ENCODE measurements at regions of chr20 and their contacts with region 1.

Region 1: DNA sequence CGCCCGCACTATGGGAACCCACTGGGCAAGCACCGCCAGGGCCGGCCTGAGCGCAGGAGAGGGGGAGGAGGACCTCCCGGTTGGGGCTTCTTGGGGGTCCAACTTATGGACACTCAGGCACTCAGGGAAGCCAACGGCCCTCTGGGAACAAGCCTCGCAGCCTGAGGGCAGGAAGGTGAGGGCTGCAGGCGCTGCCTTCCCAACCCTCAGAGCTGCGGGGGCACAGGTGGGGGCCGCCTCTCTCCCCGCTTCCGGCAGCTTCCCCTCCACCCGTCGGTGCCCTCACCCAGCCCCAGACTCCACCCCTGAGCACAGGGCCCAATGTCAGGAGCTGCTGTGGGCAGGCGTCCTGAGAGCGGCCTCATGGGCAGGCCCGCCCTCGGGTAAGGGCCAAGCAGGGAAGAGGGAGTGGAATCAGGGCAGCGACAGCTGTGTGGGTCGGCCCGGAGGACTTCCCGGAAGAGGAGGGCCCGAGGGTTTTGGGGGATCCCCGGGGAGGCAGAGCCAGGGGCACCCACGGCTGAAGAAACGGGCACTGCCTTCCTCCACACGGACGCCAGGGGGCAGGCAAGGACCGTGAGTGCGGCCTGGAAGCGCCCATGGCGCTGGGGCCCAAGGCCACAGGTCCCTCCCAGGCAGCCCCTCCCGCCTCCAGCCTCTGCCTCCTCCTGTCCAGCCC is 488 bp upstream of the PTK6 start:
- DNase-seq: peak; percentile 98
- ATAC-seq: peak; percentile 85
- H3K4me3 ChIP-seq: peak overlapping the region; percentile 84
- H3K27ac ChIP-seq: peak overlapping the region; percentile 85
- H3K4me1 ChIP-seq: peaks cover 33% of the 10 kb centered on the region
- H3K27me3 ChIP-seq: no peaks in the 10 kb centered on the region
- CTCF ChIP-seq: peak; percentile 84

Region 2: DNA sequence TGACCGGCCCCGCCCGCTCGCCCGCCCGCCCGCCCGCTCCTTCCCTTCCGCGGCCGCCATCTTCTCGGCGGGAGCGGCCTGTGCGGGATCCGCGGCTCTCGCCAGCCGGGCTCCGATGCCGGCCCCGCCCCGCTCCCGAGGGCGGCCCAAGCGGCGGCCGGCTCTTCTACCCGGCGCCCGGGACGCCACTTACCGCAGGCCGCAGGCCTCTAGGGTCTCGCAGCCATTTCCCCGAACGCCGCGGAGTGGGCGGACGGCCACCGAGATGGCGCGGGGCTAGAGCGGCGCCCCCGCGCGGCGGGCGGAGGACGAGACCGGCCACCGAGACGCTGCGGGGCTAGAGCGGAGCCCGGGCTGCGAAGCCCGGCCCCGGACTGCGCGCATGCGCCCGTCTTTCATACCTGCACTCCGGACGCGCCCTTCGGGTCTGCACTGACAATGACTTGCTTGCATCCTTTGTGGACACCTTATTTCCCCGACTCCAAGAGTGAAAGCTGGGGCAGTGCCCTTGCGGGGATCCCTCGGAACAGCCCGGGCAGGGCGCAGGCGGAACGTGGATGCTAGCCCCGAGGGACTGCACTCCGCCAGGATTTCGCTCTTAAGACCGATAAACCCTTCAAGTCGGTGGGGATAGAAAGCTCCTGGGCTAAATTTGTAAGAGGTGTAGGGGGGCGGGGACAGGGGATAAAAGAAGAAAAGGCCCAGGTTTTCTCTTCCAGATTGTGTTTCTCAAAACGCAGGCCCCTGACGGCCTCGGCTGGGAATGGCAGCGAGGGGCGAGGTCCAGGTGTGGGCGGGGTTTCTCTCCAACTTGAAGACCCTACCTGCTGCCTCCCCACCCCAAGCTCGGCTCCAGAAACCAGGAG is 611.2 kb before region 1 on chr20 and contains the start of gene DIDO1:
- CTCF ChIA-PET with region 1: no interaction called
- POLR2A ChIA-PET with region 1: no interaction called
- intact Hi-C with region 1: loop called (anchors 5 kb)
- DNase-seq: peak; percentile 91
- ATAC-seq: peak; percentile 75
- H3K4me3 ChIP-seq: peak within 1 kb of the TSS; percentile 80
- H3K27ac ChIP-seq: peak within 1 kb of the TSS; percentile 78
- H3K4me1 ChIP-seq: peaks cover 27% of the 10 kb centered on the region
- H3K27me3 ChIP-seq: no peaks in the 10 kb centered on the region
- CTCF ChIP-seq: peak; percentile 57
- total RNA-seq, gene DIDO1: 33.2 and 40.4 TPM in 2 replicates

Region 3: GRCh38 chr20:63580796-63581461 is 43.3 kb after region 1 on chr20:
- CTCF ChIA-PET with region 1: interaction called, 3 read pairs
- POLR2A ChIA-PET with region 1: interaction called, 3 read pairs
- intact Hi-C with region 1: loop called (anchors 2 kb)
- DNase-seq: peak; percentile 86
- ATAC-seq: peak; percentile 95
- H3K4me3 ChIP-seq: no peak overlapping the region
- H3K27ac ChIP-seq: peak overlapping the region; percentile 7; the same call in 1 of the 2 replicates
- H3K4me1 ChIP-seq: peaks cover 5% of the 10 kb centered on the region
- H3K27me3 ChIP-seq: no peaks in the 10 kb centered on the region
- CTCF ChIP-seq: peak; percentile 85

Region 4: GRCh38 chr20:63641792-63642544 is 104.3 kb after region 1 on chr20:
- CTCF ChIA-PET with region 1: interaction called, 76 read pairs
- POLR2A ChIA-PET with region 1: interaction called, 24 read pairs
- intact Hi-C with region 1: loop called (anchors 5 kb)
- DNase-seq: peak; percentile 92
- ATAC-seq: peak; percentile 72
- H3K4me3 ChIP-seq: peak overlapping the region; percentile 71
- H3K27ac ChIP-seq: peak overlapping the region; percentile 41; the same call in 1 of the 2 replicates
- H3K4me1 ChIP-seq: peaks cover 6% of the 10 kb centered on the region
- H3K27me3 ChIP-seq: no peaks in the 10 kb centered on the region
- CTCF ChIP-seq: peak; percentile 49

Region 5: DNA sequence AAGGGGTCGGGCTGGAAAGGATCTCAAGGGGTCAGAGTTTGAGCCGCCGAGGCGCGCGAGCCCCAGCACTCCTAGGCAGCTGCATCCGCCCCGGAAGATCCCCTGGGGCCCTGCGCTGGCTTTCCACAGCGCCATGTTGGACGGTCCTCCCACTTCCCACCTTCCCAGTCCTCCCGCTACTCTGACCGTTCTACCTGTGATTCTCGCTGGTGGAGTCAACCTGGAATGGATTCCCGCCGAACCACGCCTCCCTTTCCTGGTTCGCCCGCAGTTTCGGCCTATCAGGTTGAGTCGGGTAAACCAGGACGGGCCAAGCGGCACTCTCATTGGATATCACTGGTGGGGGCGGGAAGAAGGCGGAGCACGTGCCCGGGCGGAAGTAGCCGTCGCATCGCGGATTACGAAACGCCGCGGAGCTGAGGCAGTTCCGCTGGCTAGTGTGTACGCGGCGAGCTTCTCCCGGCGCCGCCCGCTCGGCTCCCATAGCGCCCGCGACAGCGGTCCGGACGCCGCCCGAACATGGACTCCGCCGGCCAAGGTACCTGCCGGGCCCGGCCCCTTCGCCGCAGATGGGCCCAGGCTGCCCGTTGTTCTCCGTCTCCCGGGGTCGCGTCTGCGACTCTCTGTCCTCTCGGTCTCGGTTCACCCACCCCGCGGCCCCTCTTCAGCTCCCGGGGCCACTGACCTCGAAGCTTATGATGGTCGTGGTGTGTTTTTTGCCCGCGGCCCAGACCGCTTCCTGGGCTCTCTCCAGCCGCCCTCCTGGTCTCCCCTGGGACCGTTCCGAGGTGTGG is 327.4 kb after region 1 on chr20 and contains the start of gene TPD52L2:
- CTCF ChIA-PET with region 1: interaction called, 10 read pairs
- POLR2A ChIA-PET with region 1: no interaction called
- intact Hi-C with region 1: no loop called
- DNase-seq: peak; percentile 99
- ATAC-seq: peak; percentile 86
- H3K4me3 ChIP-seq: peak within 1 kb of the TSS; percentile 90
- H3K27ac ChIP-seq: peak within 1 kb of the TSS; percentile 77
- H3K4me1 ChIP-seq: peaks cover 10% of the 10 kb centered on the region
- H3K27me3 ChIP-seq: no peaks in the 10 kb centered on the region
- CTCF ChIP-seq: no peak
- total RNA-seq, gene TPD52L2: 147 and 167 TPM in 2 replicates

Region 6: DNA sequence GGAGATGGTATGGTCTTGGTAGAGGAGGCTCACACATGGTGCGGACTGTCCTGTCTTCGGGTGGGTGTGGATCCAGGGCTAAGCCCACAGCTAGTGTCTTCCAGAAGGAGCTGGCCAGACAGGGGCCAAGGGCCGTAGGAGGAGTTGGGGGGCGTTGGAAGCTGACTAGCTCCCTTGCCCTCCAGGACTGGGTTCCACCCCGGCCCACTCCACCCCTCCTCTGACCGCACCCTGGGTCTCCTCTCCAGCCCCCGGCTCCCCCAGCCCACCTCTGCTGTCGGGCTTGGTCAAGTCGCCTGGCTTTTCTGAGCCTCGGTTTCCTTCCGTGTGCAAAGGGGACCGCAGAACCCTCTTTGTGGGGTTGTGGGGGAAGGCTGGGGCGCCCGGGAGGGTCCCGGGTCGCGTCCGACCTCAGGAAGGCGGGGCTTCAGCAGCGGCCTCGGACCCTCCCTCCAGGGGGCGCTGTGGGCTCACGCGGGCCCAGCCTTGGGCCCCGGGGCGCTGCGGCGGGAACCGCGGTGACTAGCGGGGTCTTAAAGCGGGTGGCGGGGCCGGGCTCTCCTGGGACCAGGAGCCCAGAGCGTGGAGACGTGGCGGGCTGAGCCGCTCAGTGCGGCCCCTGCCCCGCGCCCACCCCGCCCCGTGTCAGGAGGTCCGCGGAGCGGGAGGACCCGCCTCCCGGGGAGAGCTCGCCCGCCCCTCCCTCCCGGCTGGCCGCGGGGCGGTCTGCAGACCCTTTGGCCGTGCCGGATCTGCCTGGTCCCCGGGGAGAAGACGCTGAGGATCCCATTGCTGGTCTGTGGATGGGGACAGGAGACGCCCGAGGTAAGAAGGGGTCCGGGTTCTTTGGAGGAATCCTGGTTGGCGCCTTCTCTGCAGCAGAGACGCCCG is 564.3 kb after region 1 on chr20:
- CTCF ChIA-PET with region 1: no interaction called
- POLR2A ChIA-PET with region 1: interaction called, 19 read pairs
- intact Hi-C with region 1: no loop called
- DNase-seq: peak; percentile 59
- ATAC-seq: peak; percentile 85
- H3K4me3 ChIP-seq: peak overlapping the region; percentile 64
- H3K27ac ChIP-seq: no peak overlapping the region
- H3K4me1 ChIP-seq: no peaks in the 10 kb centered on the region
- H3K27me3 ChIP-seq: 0 out of 2 replicates have a peak, but pooled peaks cover 7% of the 10 kb centered on the region
- CTCF ChIP-seq: peak; percentile 81

Measured in PC-3 (cell line).